Psoas muscle (tissue), 8 donors: ENCODE measurements at regions of chr6 and their contacts with region 1.

Region 1: DNA sequence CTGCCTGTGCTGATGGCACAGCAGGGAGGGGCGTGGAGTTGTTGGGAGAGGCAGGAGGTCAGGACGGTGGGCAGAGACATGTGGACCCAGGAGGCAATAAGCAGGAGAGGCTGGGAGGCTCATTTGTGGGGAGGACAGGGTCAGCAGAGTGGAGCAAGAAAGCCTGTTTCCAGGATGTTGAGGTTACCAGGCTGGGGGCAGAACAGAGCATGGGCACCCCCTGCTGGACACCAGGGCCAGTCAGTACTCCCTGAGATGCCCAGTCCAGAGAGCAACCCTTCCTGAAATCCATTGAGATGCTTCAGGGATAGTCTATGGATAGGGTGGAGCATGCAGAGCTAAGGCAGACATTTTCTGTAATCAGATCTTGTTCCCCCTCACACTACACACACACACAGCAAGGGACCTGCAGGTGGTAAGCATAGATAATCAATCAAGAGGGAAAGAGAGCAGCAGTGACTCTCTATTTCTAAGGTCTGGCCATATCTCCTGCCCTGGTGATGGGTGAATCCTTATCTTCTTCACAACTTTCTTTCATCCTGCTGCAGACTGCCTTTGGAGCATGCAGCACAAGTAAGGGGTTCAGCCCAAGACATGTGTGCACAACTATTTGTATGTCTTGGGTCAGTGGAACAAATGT is 41.7 kb downstream of the MOCS1 start:
- DNase-seq: peak; percentile 67 to 81
- ATAC-seq: peak; percentile 56 to 68 (median 64)
- H3K4me3 ChIP-seq: no peak overlapping the region
- H3K27ac ChIP-seq: no peak overlapping the region
- H3K4me1 ChIP-seq: peaks cover 18% of the 10 kb centered on the region
- H3K27me3 ChIP-seq: no peaks in the 10 kb centered on the region
- CTCF ChIP-seq: peak; percentile 71

Region 2: DNA sequence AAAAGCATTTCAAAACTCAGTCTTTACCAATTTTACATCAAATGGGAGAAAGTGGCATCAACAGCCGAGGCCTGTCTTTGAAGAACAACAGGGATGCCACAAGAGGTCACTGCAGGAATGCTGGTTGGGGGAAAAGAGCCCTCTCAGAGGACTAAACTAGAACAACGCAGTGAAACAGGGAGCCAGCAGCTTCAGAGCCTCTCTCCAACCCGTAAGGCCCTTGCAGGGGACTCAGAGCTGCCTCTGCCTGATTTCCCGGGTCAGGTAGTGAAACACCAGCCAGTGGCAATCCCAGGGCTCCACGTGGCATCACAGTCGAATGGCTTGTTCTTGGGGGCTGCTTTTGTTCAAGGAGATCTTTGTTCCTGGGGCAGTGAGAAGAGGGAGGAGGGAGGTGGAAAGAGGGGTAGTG is 515.1 kb before region 1 on chr6:
- intact Hi-C with region 1: loop called (anchors 5 kb)
- DNase-seq: peak; percentile 42 to 63
- ATAC-seq: peak; percentile 67 to 80 (median 76)
- H3K4me3 ChIP-seq: no peak overlapping the region
- H3K27ac ChIP-seq: no peak overlapping the region
- H3K4me1 ChIP-seq: no peaks in the 10 kb centered on the region
- H3K27me3 ChIP-seq: peaks cover 0 to 3% (median 0%) of the 10 kb centered on the region in 3 donors
- CTCF ChIP-seq: peak; percentile 58